Ovary (tissue), 10 donors: ENCODE measurements at regions of chr1 and their contacts with region 1.

Region 1: DNA sequence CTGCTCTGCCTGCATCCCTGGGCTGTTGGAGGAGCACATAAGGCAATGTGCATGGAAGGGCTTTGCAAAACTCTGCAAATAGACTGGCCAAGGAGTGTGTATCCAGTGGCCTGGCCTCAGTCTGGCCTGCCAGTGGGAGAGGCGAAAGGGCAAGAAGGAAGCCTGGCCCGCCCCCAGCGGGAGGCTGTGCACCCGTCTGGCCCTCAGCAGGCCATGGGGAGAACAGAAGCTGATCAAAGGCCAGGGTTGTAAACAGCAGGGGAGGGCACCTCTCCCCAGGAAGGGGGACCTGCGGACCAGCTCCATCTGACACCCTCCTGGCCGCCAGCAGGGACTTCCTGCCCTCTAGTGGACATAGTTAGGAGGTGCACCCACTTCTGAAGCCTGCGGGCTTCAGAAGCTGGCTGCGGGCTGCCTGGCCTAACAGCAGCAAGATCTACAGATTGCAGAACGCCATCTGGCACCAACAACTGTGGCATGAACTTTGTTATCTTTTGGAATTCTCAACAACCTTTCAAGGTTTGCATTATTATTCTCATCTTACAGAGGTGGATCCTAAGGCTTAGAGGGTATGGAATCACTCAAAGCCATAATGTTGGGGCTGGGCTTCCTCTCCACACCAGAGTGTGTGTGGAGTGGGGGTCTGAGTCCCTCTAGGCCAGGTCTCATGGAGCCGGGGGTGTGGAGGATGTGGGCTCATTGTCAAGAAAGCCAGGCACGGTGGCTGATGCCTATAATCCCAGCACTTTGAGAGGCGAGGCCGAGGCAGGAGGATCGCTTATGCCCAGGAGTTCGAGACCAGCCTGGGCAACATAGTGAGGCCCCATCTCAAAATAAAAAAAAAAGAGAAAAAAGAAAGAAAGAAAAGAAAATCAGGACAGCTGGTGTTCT is 18.9 kb upstream of the CDK18 start:
- DNase-seq: peak; percentile 73 to 82 (median 77)
- H3K4me3 ChIP-seq: no peak overlapping the region
- H3K27ac ChIP-seq: no peak overlapping the region
- H3K4me1 ChIP-seq: peaks cover 3% of the 10 kb centered on the region
- H3K27me3 ChIP-seq: no peaks in the 10 kb centered on the region
- CTCF ChIP-seq: peak; percentile 88 to 92 (median 90)
- EP300 ChIP-seq: no peak
- POLR2A ChIP-seq: no peak

Region 2: GRCh38 chr1:205273551-205273982 is 212.0 kb before region 1 on chr1:
- intact Hi-C with region 1: loop called in 1 of 4 experiments (anchors 10 kb)
- DNase-seq: peak; percentile 76 to 90 (median 87)
- H3K4me3 ChIP-seq: no peak overlapping the region
- H3K27ac ChIP-seq: no peak overlapping the region
- H3K4me1 ChIP-seq: peaks cover 6% of the 10 kb centered on the region
- H3K27me3 ChIP-seq: no peaks in the 10 kb centered on the region
- CTCF ChIP-seq: peak; percentile 88 to 96 (median 96)
- EP300 ChIP-seq: no peak
- POLR2A ChIP-seq: no peak

Region 3: DNA sequence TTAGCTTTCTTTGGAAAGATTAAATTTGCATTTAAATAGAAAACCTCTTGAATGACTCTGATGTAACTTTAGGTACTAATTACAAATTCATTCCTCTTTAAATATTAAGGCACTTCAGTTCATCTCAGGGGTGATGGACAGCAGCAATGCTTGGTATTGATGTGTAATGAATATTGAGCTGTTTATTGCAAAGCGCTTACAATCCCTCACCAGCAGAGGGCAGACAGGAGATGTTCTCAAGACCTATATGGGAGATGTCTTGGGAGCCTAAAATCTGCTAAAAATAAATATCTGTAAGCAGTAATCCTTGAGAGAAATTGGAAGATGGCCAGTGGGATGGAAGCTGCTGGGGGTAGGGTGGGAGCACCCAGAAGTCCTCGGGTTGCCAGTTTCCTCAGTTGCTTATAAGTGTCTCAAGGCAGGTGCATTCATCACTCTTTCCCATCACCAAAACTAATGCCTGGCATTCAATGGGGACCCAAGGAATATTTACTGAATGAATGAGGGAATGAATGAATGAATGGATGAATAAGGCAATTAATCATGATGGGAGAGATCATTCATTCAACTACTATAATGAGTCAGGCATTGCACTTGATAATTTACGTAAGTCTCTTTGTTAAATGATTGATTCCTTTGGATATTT is 131.2 kb before region 1 on chr1:
- intact Hi-C with region 1: loop called in 1 of 4 experiments (anchors 5 kb)
- DNase-seq: peak in 3 of 5 donors; percentile 63 to 81 (median 77)
- H3K4me3 ChIP-seq: no peak overlapping the region
- H3K27ac ChIP-seq: peak overlapping the region in 1 of 2 donors; percentile 84
- H3K4me1 ChIP-seq: peaks cover 10% of the 10 kb centered on the region
- H3K27me3 ChIP-seq: no peaks in the 10 kb centered on the region
- CTCF ChIP-seq: peak; percentile 70 to 88 (median 86)
- EP300 ChIP-seq: no peak
- POLR2A ChIP-seq: no peak

Region 4: DNA sequence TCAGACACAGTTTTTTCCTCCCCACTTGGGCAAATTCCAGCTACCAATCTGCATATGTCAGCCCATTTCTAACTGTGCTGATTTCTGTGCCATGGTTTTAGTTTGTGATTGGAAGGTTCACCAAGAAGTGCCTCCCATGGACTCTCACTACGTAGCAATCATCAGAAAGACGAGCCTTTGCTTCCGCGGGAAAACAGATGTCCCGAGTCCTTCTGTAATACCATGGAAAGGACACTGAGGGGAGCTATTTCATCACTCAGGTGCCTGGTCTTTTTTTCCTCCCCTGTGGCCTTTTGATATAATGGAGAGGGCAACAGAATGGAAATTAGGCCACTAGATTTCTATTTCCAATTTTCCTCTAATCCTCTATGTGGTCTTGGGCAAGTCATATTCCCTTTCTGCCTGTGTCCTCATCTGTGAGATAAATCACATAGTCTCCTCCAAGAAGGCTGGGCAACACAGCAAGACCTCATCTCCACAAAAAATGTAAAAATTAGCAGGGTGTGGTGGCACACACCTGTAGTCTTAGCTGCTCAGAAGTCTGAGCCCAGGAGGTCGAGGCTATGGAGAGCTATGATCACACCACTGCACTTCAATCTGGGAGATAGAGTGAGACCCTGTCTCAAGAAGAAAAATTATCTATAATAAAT is 88.5 kb before region 1 on chr1:
- intact Hi-C with region 1: loop called in 2 of 4 experiments (anchors 5 to 10 kb)
- DNase-seq: peak in 1 of 5 donors; percentile 44
- H3K4me3 ChIP-seq: no peak overlapping the region
- H3K27ac ChIP-seq: no peak overlapping the region
- H3K4me1 ChIP-seq: no peaks in the 10 kb centered on the region
- H3K27me3 ChIP-seq: no peaks in the 10 kb centered on the region
- CTCF ChIP-seq: peak; percentile 28 to 79 (median 78)
- EP300 ChIP-seq: no peak
- POLR2A ChIP-seq: no peak

Region 5: GRCh38 chr1:205438213-205439157 is 47.1 kb before region 1 on chr1:
- intact Hi-C with region 1: loop called in 2 of 4 experiments (anchors 2 to 5 kb)
- DNase-seq: peak; percentile 91 to 93 (median 91)
- H3K4me3 ChIP-seq: no peak overlapping the region
- H3K27ac ChIP-seq: peak overlapping the region; percentile 27 to 31
- H3K4me1 ChIP-seq: peaks cover 12% of the 10 kb centered on the region
- H3K27me3 ChIP-seq: no peaks in the 10 kb centered on the region
- CTCF ChIP-seq: peak; percentile 67 to 90 (median 86)
- EP300 ChIP-seq: no peak
- POLR2A ChIP-seq: no peak

Region 6: DNA sequence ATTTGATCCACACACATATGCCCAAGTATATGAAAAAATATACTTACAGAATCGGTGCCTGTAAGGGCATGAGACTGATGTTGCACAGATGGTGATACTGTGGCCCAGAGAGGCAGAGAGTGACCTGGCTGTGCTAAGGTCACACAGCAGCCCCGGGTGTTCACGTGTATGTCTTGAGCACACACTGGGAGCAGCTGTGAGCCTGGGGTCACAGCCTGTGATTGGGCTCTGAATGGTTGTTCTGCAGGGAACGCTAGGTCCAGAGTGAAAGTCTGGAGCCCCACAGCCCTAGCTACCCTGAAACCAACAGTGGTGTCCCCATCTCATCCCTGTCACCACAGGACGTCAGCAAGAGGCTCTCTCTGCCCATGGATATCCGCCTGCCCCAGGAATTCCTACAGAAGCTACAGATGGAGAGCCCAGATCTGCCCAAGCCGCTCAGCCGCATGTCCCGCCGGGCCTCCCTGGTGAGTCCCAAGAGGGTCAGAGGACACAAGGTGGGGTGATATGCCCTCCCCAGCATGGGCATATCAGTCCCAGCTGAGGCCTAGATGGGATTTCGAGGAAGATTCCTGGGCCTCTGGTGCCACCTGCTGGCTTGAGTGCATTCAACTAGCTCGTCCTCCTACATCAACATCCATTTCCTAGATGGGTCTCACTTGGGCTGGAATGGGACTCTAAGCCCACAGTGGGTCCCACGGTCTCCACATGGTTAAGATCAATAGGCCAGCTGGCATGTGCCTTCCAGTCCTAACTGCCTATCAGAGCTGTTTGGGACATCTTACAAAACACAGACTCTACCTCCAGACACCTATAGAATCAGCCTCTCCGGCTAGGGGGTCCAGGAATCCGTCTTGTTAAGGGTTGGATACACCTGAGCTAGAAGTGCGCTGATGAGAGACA is 38.6 kb after region 1 on chr1:
- intact Hi-C with region 1: loop called (anchors 2 to 5 kb)
- DNase-seq: peak; percentile 76 to 91 (median 87)
- H3K4me3 ChIP-seq: no peak overlapping the region
- H3K27ac ChIP-seq: no peak overlapping the region
- H3K4me1 ChIP-seq: peaks cover 7% of the 10 kb centered on the region
- H3K27me3 ChIP-seq: no peaks in the 10 kb centered on the region
- CTCF ChIP-seq: peak; percentile 66 to 86 (median 80)
- EP300 ChIP-seq: no peak
- POLR2A ChIP-seq: no peak